ENCODE measurements at regions of chr7 and their contacts with region 1.

Region 1: GRCh38 chr7:150378853-150379440 is at the start of gene ZNF775:
- DNase-seq: peak; percentile 97 to 98
- ATAC-seq: peak; percentile 82 to 83
- H3K4me3 ChIP-seq: peak within 1 kb of the TSS; percentile 73 to 98 (median 80)
- H3K27ac ChIP-seq: peak within 1 kb of the TSS; percentile 93 to 99 (median 96)
- H3K4me1 ChIP-seq: peaks cover 16 to 17% of the 10 kb centered on the region in 2 donors
- H3K27me3 ChIP-seq: no peaks in the 10 kb centered on the region
- CTCF ChIP-seq: peak in 1 of 5 experiments; percentile 8
- POLR2A ChIP-seq: peak; percentile 91 to 96
- total RNA-seq, gene ZNF775: 3.1 to 7.5 (median 3.3) TPM

Region 2: DNA sequence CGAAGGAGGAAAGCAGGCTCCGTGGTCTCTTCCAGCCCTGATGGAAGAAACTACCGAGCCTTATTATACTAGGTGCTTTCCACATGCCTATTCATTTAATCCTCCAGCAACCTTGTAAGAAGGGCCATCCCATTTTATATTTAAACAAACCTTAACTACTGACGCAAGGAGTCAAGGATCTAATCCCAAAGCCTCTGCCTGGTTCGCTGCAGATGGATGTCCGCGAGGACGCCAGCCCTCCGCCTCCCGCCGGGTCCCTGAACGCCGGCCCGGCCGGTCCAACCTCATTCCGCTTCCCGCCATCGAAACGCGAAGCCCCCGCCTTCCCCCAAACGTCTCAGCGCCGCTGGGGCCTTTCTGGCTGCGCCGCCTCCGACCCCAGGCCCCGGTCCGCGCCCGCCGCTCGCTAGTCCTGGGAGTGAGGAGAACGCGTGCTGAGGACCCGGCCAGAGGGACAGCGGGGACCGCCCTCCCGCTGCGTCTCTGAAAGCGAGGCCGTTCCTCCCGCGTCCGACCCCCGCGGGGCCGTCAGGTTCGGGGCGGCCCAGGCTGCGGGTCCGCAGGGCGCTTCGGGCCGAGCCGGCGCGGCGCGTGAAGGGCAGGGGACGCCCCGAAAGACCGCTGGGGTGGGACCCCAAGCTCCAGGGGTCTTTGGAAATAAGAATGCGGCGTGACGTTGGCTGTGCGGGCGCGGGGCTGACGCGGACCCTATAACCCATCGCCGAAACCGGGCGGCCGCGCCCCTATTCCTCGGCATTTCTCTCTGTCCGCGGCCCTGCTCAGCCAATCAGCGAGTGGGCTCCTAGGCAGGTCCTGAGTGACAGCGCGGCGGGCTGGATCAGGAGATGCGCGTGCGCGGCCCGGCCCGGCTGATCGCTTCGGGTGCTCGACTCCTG is 505.6 kb before region 1 on chr7 and contains the start of gene ATP6V0E2:
- in situ Hi-C with region 1: no loop called
- intact Hi-C with region 1: loop called (anchors 5 kb)
- DNase-seq: peak; percentile 95
- ATAC-seq: peak; percentile 91 to 92
- H3K4me3 ChIP-seq: peak within 1 kb of the TSS; percentile 71 to 84 (median 73)
- H3K27ac ChIP-seq: peak within 1 kb of the TSS; percentile 86 to 88 (median 87)
- H3K4me1 ChIP-seq: peaks cover 13 to 14% of the 10 kb centered on the region in 2 donors
- H3K27me3 ChIP-seq: no peaks in the 10 kb centered on the region
- CTCF ChIP-seq: peak in 2 of 5 experiments; percentile 5 to 9
- POLR2A ChIP-seq: peak; percentile 80 to 82
- total RNA-seq, gene ATP6V0E2: 9.0 to 46.3 (median 12.9) TPM

Region 3: DNA sequence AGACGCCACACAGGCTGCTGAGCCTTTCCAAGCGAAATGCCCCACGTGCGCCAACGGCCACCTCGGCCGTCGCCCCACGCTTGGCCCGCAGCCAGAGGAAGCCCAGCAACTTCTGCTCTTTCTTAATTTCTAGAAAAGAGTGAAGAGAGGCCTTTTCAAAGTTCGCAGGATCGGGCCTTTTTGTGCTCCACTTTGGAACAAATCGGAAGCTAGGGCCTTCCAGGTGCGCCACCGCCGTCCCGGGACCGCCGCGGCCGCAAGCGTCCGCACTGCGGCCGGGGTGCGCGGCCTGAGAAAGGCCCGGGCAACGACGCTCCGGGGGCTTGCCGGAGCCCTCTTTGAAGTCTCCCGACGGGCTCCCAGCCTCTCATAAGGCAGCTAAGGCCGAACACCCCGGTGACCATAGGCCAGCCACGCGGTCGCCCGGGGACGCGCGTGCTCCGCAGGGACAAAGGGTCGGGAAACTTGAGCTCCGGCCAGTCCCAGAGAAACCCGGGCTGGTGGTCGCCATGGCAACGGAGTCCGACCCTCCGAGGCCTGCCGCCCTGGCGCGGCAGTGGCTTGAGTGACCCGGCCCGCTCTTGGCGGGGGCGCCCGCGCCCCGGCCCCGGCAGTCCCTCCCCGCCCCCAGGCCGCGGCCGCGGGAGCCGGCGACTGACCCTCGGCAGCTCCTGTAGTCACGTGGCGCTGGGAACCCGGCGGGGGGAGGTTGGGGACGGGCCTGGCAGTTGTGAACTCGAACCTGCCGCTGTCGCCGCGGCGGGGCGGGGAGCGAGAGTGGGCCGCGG is 10.7 kb before region 1 on chr7 and contains the start of gene REPIN1:
- in situ Hi-C with region 1: no loop called
- intact Hi-C with region 1: loop called (anchors 1 kb)
- DNase-seq: peak; percentile 90 to 94
- ATAC-seq: peak; percentile 75 to 85
- H3K4me3 ChIP-seq: peak within 1 kb of the TSS; percentile 74 to 87 (median 84)
- H3K27ac ChIP-seq: peak within 1 kb of the TSS; percentile 98 to 100 (median 100)
- H3K4me1 ChIP-seq: peaks cover 33 to 40% of the 10 kb centered on the region in 2 donors
- H3K27me3 ChIP-seq: no peaks in the 10 kb centered on the region
- CTCF ChIP-seq: peak in 1 of 5 experiments; percentile 22
- POLR2A ChIP-seq: peak; percentile 89 to 91
- total RNA-seq, gene REPIN1: 115 to 332 (median 159) TPM

Region 4: GRCh38 chr7:150393325-150393724 is 14.4 kb after region 1 on chr7:
- in situ Hi-C with region 1: no loop called
- intact Hi-C with region 1: no loop called
- DNase-seq: no peak
- ATAC-seq: no peak
- H3K4me3 ChIP-seq: no peak overlapping the region
- H3K27ac ChIP-seq: no peak overlapping the region
- H3K4me1 ChIP-seq: peaks cover 6 to 11% of the 10 kb centered on the region in 2 donors
- H3K27me3 ChIP-seq: no peaks in the 10 kb centered on the region
- CTCF ChIP-seq: no peak
- POLR2A ChIP-seq: no peak

Region 5: DNA sequence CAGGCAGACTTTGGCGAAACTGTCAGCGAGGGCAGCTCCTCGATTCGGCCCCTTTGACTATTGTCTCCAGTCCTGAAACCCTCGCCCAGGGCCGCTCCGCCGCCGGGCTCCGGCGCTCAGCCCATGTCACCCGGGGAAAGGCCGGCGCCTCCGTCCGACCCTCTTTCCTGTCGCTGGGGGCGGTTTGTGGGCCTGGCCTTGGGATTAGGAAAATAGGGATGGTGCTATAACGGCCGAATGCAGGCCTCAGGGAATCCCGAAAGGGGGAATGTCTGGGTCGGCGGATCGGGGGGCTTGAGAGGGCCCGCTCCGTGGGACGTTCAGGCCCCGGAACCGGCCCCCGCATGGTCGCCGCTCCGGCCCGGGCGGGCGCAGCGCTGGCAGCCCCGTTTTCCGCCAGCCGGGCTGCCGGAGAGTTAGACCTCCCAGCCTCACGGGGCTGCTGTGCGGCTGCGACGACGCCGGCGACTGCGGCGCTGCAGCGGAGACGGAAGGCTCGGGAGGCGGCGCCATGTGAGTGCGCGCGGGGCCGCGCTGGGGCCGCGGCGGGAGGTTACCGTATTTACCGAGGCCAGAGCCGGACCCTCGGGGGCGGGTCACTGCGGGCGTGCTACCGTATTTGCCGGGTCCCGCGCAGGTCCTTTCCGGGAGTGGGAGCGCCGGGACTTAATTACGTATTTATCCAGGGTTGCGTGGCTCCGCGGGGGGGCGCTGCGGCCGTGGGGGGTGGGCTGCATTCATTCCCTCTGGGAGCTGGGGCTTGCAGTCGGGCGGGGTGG is 26.0 kb after region 1 on chr7:
- in situ Hi-C with region 1: no loop called
- intact Hi-C with region 1: loop called (anchors 1 kb)
- DNase-seq: peak; percentile 73 to 83
- ATAC-seq: peak; percentile 85
- H3K4me3 ChIP-seq: peak overlapping the region; percentile 69 to 83 (median 74)
- H3K27ac ChIP-seq: peak overlapping the region; percentile 94 to 97 (median 96)
- H3K4me1 ChIP-seq: peaks cover 5 to 9% of the 10 kb centered on the region in 2 donors
- H3K27me3 ChIP-seq: no peaks in the 10 kb centered on the region
- CTCF ChIP-seq: peak in 1 of 5 experiments; percentile 42
- POLR2A ChIP-seq: peak; percentile 62 to 73